ENCODE measurements at regions of chr1 and their contacts with region 1.

Region 1: DNA sequence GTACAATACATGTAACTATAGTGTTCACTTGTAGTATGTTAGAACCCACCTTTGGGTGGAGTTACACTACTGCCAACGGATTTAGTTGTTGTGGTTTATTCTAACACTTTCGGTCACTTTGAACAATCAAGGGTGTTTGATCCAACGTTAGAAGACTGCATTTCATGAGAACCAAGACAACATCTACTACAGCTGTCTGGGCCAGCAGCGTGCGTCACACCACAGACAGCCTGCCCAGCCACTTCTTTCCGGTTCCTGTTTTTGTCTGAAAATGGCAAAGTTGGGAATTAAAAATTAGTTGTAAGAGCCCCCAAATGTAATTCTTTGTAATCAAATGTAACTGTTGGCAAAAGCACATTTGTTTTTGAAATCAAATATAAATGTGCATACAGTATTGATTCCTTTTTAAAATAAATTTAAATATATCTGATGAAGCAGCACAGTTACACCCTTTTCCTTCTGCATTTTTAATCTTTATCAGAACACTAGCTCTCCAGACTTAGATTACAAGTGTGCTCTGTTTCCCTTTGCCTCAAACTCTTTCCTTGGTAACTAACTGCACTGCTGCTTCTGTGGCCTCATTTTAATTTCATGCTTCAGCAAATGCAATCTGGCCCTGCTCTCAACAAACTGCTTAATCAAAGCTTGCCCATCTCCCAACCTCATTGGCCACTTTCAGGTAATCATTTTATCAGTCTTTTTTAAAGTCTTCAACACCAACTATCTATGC is 86.6 kb upstream of the DPH5 start:
- DNase-seq: peak; percentile 93
- H3K4me3 ChIP-seq: no peak overlapping the region
- H3K27ac ChIP-seq: peak overlapping the region; percentile 78
- H3K4me1 ChIP-seq: peaks cover 12% of the 10 kb centered on the region
- H3K27me3 ChIP-seq: no peaks in the 10 kb centered on the region
- CTCF ChIP-seq: no peak
- POLR2A ChIP-seq: no peak

Region 2: GRCh38 chr1:100959502-100960060 is 152.6 kb before region 1 on chr1:
- CTCF ChIA-PET with region 1: no interaction called
- POLR2A ChIA-PET with region 1: no interaction called
- dilution Hi-C with region 1: no loop called
- intact Hi-C with region 1: loop called (anchors 2 kb)
- DNase-seq: peak; percentile 85
- H3K4me3 ChIP-seq: no peak overlapping the region
- H3K27ac ChIP-seq: peak overlapping the region; percentile 62
- H3K4me1 ChIP-seq: peaks cover 31% of the 10 kb centered on the region
- H3K27me3 ChIP-seq: no peaks in the 10 kb centered on the region
- CTCF ChIP-seq: no peak
- POLR2A ChIP-seq: no peak

Region 3: DNA sequence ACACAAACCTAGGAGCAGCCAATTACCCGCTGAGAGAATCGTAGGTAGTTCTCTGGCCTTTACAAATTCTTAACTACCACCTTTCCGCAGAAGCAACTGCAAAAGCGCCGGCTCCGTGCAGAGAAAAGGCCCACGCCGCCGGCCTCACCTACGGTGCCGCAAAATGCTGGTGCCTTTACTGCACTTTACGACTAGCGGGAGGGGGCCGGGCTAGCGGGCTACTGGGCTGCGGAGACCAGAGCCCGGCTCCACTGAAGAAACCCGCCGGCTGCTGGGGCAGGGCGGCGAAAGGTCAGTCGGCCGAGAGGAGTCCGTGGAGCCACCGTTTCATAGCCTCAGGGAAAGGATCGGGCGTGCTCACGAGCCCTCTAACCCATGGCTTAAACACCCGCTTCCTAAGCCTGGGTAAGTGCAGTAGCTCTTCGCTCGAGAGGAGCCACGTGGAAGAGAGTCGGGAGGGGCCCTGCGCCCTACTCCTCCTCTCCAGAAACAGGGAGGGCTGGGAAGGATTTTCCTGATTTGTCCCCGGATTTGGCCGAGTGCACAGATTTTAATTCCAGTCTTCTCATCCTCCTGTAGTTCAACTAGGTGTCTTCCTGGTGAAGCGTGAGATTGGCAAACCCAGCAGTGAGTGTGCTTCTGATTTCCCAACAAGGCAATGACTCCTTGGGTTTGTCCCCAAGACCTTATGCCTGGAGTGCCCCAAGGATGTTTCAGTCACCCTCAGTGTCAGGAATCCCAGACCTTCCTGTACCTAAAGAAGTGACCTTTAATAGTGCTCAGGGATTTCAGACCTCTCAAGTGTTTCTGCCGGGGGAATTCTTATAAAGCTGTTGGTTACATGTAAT is 86.3 kb before region 1 on chr1 and contains the start of gene DPH5:
- CTCF ChIA-PET with region 1: no interaction called
- POLR2A ChIA-PET with region 1: no interaction called
- dilution Hi-C with region 1: no loop called
- intact Hi-C with region 1: loop called (anchors 2 kb)
- DNase-seq: peak; percentile 93
- H3K4me3 ChIP-seq: peak within 1 kb of the TSS; percentile 70 to 96 (median 76)
- H3K27ac ChIP-seq: peak within 1 kb of the TSS; percentile 75
- H3K4me1 ChIP-seq: peaks cover 22% of the 10 kb centered on the region
- H3K27me3 ChIP-seq: no peaks in the 10 kb centered on the region
- CTCF ChIP-seq: no peak
- POLR2A ChIP-seq: peak; percentile 93
- total RNA-seq, gene DPH5: 31.3 and 37.2 TPM in 2 replicates

Region 4: DNA sequence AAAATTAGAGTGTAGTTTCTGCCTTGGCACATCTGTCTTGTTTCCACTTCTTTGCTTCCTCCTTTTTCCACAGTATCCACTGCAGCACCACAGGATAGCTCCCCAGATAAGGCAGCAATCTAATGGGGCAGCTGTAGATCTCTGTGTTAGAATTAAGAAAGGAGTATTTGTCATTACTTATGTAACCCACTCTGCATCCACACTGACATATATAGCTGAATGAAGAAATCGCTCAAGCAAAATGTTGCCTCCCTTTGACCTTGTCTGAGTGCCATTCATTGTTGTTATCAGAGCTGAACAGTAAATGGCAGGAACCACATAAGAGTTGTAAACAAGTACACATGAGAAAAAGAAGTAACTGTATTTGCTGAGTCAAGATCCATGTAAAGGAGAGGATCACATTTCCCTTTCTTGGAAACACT is 40.7 kb before region 1 on chr1:
- CTCF ChIA-PET with region 1: no interaction called
- POLR2A ChIA-PET with region 1: no interaction called
- dilution Hi-C with region 1: no loop called
- intact Hi-C with region 1: no loop called
- DNase-seq: peak; percentile 72
- H3K4me3 ChIP-seq: no peak overlapping the region
- H3K27ac ChIP-seq: no peak overlapping the region
- H3K4me1 ChIP-seq: peaks cover 2% of the 10 kb centered on the region
- H3K27me3 ChIP-seq: no peaks in the 10 kb centered on the region
- CTCF ChIP-seq: no peak
- POLR2A ChIP-seq: no peak

Region 5: DNA sequence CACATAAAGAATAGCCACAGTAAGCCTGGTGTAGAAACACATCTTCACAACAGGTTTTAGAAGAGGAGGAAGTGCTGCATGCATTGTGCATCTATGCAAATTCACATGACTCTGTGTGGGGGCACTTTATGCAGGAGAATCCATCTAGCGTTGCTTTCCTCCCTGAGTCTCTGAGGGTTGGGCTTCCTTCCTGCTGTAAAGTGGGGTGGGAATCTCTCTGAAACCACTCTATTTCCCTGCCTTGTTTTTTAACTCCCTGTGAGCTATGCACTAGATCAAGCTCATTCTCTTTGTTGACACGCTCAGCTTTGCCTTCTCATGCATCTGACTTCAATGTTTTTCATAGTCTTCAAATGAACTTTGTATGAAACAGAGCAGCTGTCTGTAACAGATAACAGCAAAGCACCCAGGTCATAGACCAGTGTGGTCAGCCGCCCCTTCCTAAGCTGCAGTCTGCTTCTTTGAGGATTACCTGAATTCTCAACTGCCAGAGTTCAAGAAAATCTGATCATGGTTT is 16.1 kb after region 1 on chr1:
- CTCF ChIA-PET with region 1: interaction called, 10 read pairs
- POLR2A ChIA-PET with region 1: no interaction called
- dilution Hi-C with region 1: no loop called
- intact Hi-C with region 1: no loop called
- DNase-seq: peak; percentile 67
- H3K4me3 ChIP-seq: no peak overlapping the region
- H3K27ac ChIP-seq: no peak overlapping the region
- H3K4me1 ChIP-seq: peaks cover 6% of the 10 kb centered on the region
- H3K27me3 ChIP-seq: no peaks in the 10 kb centered on the region
- CTCF ChIP-seq: no peak
- POLR2A ChIP-seq: no peak